ENCODE measurements at regions of chr4 and their contacts with region 1.

Region 1: GRCh38 chr4:119212234-119212963 is at the start of gene USP53:
- DNase-seq: peak; percentile 97
- ATAC-seq: peak; percentile 93
- H3K4me3 ChIP-seq: peak within 1 kb of the TSS; percentile 74
- H3K27ac ChIP-seq: peak within 1 kb of the TSS; percentile 90
- H3K4me1 ChIP-seq: peaks cover 3% of the 10 kb centered on the region; the same call in 1 of the 2 replicates
- H3K27me3 ChIP-seq: no peaks in the 10 kb centered on the region
- CTCF ChIP-seq: no peak
- POLR2A ChIP-seq: peak; percentile 97
- RAD21 ChIP-seq: peak; percentile 25
- total RNA-seq, gene USP53: 24.0 and 34.7 TPM in 2 replicates

Region 2: DNA sequence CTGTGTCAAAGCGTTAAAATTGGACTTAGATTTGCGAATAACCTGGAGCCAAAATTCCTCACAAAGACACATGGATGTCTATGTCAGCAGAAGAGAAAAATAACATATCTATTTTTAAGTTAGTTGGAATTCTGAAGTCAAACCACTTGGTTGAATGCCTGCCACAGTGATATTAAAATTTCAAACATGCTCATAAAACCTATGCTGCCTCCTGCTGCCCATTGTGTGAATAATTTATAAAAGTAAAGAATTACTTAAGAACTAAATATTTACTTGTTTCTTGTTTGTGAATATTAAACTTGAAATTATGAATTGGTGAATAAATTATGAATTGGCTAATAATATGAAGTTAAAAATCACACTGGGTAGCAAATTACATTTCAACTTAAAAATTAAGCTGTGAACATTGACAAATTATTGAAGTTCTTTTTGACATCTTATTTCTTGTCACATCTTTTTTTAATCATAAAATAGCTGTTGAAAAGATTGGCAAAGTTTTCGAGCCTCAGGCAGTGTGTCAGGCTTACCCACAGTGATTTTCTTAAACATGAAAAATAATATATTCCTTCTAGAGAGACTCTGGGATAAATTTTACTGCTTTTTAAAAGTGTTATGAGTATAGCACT is 74.1 kb after region 1 on chr4:
- CTCF ChIA-PET with region 1: no interaction called
- POLR2A ChIA-PET with region 1: no interaction called
- dilution Hi-C with region 1: no loop called
- in situ Hi-C with region 1: no loop called
- intact Hi-C with region 1: loop called (anchors 2 kb)
- DNase-seq: peak; percentile 83
- ATAC-seq: peak; percentile 53; the same call in 1 of the 2 replicates
- H3K4me3 ChIP-seq: no peak overlapping the region
- H3K27ac ChIP-seq: no peak overlapping the region; the same call in 1 of the 2 replicates
- H3K4me1 ChIP-seq: no peaks in the 10 kb centered on the region
- H3K27me3 ChIP-seq: no peaks in the 10 kb centered on the region
- CTCF ChIP-seq: peak; percentile 70
- POLR2A ChIP-seq: no peak
- RAD21 ChIP-seq: peak; percentile 79